Activated CD4-positive, alpha-beta memory T cell treated with anti-CD3 and anti-CD28 coated beads for 36 hours (primary cell): ENCODE measurements at regions of chr17 and their contacts with region 1.

Region 1: GRCh38 chr17:18314731-18315561 is at the starts of genes SMCR8 and TOP3A:
- DNase-seq: peak; percentile 99
- H3K4me3 Mint-ChIP-seq: peak within 1 kb of the TSS; percentile 95
- H3K27ac Mint-ChIP-seq: peak within 1 kb of the TSS; percentile 98
- H3K4me1 Mint-ChIP-seq: peaks cover 73% of the 10 kb centered on the region
- H3K27me3 Mint-ChIP-seq: no peaks in the 10 kb centered on the region
- total RNA-seq, gene SMCR8: 11.1 to 11.3 TPM
- total RNA-seq, gene TOP3A: 52.4 to 53.0 TPM

Region 2: GRCh38 chr17:17766077-17766743 is 548.7 kb before region 1 on chr17:
- CTCF ChIA-PET with region 1: no interaction called
- POLR2A ChIA-PET with region 1: no interaction called
- intact Hi-C with region 1: no loop called
- DNase-seq: no peak
- H3K4me3 Mint-ChIP-seq: no peak overlapping the region
- H3K27ac Mint-ChIP-seq: no peak overlapping the region
- H3K4me1 Mint-ChIP-seq: no peaks in the 10 kb centered on the region
- H3K27me3 Mint-ChIP-seq: no peaks in the 10 kb centered on the region

Region 3: GRCh38 chr17:18225121-18225566 is 89.8 kb before region 1 on chr17:
- CTCF ChIA-PET with region 1: no interaction called
- POLR2A ChIA-PET with region 1: no interaction called
- intact Hi-C with region 1: loop called (anchors 1 kb)
- DNase-seq: peak; percentile 97
- H3K4me3 Mint-ChIP-seq: peak overlapping the region; percentile 61
- H3K27ac Mint-ChIP-seq: peak overlapping the region; percentile 28
- H3K4me1 Mint-ChIP-seq: peaks cover 31% of the 10 kb centered on the region
- H3K27me3 Mint-ChIP-seq: no peaks in the 10 kb centered on the region

Region 4: DNA sequence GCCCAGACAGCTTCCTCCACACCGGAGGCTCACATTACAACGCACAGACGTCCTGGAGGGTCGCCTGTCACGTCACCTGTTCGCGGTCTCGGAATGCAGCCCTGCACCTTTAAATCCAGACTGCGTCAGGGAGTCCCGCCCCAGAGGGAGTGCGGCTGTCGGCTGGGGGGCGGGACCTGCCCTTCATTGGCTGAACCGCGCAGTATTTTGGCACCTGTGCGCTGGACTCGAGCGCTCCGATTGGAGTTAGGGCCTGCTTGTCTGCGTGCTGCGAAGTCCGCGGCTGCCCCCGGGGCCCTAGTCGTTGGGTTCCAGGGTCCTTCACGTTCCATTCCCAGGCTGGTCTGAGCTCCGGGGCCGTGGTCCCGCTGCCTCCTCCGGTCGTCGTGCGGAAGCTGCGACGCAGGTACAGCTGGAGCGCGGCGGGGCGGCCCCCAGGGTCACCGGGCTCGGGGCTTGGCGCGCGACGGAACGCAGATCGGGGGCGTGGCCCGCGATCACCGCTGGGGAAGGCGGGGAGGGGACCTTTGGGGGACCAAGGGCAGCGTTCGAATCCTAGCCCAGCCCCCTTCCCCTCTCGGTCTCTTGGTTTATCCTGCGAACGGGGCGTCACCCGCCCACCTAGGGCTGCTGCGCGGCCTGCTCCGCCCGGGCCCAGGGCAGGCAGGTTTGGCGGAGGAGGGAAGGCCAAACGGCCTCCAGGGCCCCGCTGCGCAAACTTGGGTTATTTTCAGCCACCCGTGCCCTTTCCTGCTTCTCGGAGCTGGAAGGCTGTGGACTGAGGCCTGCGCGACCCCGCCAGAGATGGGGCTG is 54.4 kb before region 1 on chr17 and contains the start of gene MIEF2:
- CTCF ChIA-PET with region 1: interaction called, 4 read pairs
- POLR2A ChIA-PET with region 1: no interaction called
- intact Hi-C with region 1: loop called (anchors 1 kb)
- DNase-seq: peak; percentile 95
- H3K4me3 Mint-ChIP-seq: peak within 1 kb of the TSS; percentile 75
- H3K27ac Mint-ChIP-seq: peak within 1 kb of the TSS; percentile 75
- H3K4me1 Mint-ChIP-seq: peaks cover 43% of the 10 kb centered on the region
- H3K27me3 Mint-ChIP-seq: no peaks in the 10 kb centered on the region
- total RNA-seq, gene MIEF2: 6.5 to 6.8 TPM

Region 5: DNA sequence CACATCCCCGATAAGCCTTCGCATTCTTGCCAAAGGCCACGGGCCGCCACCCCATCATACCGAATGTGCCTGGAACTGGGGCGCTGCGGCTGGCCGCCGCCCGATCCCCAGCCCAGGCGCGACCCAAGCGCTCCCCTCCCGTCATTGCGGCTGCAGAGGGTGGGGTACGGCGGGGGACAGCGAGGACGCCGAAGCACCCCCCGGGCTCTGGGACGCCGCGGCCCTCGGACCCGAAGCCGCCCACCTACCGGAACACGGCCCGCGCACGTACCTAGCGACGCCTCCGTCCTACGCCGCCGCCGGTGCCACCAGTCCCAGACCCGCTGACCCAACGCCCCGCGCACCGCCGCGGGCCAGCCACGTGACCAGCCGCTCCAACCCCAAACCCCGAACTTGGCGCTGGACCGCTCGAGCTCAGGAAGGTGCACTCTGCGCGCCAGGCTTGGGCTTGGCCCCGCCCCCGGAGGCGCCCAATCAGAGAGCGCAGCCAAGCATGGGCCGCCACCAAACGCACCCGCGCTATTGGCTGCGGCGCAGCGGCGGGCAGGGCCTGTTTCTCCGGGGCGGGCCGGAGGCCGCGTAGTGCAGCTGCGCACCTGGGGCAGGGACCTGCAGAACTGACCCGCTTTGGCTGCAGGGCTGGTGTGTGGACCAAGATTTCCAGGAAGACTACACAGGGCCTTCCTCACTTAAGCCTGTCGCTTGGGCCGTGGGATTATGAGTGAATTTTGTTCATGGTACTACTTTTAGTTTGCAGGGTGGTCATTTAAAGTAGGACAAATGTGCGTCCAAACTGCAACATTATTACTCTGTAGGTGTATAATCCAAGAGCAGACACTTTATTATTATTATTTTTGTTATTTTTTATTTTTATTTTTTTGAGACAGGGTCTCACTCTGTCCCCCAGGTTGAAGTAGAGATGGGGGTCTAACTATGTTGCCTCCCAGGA is 48.4 kb after region 1 on chr17 and contains the start of gene SHMT1:
- CTCF ChIA-PET with region 1: no interaction called
- POLR2A ChIA-PET with region 1: no interaction called
- intact Hi-C with region 1: loop called (anchors 1 kb)
- DNase-seq: peak; percentile 95
- H3K4me3 Mint-ChIP-seq: peak within 1 kb of the TSS; percentile 88
- H3K27ac Mint-ChIP-seq: peak within 1 kb of the TSS; percentile 81
- H3K4me1 Mint-ChIP-seq: peaks cover 15% of the 10 kb centered on the region
- H3K27me3 Mint-ChIP-seq: no peaks in the 10 kb centered on the region
- total RNA-seq, gene SHMT1: 49.2 to 49.9 TPM